Activated B cell treated with CpG ODN at 0.5 μM for 24 hours (primary cell): ENCODE measurements at regions of chr4 and their contacts with region 1.

Region 1: DNA sequence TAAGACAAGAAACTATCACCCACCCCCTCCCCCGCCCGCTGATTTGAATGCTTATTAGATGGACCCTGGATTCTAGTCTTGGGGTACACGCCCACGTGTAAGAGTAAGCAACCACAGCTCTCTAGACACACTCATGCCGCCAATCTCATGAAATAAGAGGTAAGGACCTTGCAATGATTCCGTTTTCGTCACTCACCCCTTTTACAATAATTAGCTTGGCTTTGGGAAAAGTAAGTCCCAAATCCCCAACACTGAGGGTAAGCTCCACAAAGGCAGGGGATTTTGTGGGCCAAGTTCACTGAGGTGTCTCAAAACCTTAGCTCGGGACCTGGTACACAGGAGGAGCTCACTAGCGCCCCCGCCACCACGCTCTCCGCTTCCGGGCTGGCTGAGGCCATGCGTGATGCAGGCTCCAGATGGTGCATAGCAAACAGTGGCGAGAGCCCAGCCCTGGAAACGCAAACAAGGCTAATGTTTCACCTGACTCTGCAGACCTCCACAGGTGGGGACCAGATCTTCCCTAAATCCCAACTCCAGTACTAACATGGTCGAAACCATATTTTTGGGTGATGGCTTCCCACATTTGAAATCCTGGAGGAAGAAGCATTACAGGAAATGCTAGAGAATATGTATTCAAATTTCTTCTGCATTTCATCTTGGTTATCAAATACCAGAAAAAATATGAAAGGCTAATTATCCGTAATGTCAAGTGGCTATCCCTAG is 4.1 kb downstream of the PLAC8 start:
- DNase-seq: peak; percentile 82
- ATAC-seq: peak; percentile 76
- H3K4me3 Mint-ChIP-seq: peak overlapping the region; percentile 94
- H3K27ac Mint-ChIP-seq: peak overlapping the region; percentile 99
- H3K4me1 Mint-ChIP-seq: peaks cover 70% of the 10 kb centered on the region
- H3K27me3 Mint-ChIP-seq: no peaks in the 10 kb centered on the region
- CTCF ChIP-seq: no peak

Region 2: GRCh38 chr4:82890901-82891706 is 219.3 kb before region 1 on chr4 and contains the start of gene SEC31A:
- CTCF ChIA-PET with region 1: no interaction called
- POLR2A ChIA-PET with region 1: no interaction called
- intact Hi-C with region 1: no loop called
- DNase-seq: peak; percentile 97
- ATAC-seq: peak; percentile 92
- H3K4me3 Mint-ChIP-seq: peak within 1 kb of the TSS; percentile 93
- H3K27ac Mint-ChIP-seq: peak within 1 kb of the TSS; percentile 94
- H3K4me1 Mint-ChIP-seq: peaks cover 34% of the 10 kb centered on the region
- H3K27me3 Mint-ChIP-seq: no peaks in the 10 kb centered on the region
- CTCF ChIP-seq: no peak
- total RNA-seq, gene SEC31A: 154 and 172 TPM in 2 replicates

Region 3: DNA sequence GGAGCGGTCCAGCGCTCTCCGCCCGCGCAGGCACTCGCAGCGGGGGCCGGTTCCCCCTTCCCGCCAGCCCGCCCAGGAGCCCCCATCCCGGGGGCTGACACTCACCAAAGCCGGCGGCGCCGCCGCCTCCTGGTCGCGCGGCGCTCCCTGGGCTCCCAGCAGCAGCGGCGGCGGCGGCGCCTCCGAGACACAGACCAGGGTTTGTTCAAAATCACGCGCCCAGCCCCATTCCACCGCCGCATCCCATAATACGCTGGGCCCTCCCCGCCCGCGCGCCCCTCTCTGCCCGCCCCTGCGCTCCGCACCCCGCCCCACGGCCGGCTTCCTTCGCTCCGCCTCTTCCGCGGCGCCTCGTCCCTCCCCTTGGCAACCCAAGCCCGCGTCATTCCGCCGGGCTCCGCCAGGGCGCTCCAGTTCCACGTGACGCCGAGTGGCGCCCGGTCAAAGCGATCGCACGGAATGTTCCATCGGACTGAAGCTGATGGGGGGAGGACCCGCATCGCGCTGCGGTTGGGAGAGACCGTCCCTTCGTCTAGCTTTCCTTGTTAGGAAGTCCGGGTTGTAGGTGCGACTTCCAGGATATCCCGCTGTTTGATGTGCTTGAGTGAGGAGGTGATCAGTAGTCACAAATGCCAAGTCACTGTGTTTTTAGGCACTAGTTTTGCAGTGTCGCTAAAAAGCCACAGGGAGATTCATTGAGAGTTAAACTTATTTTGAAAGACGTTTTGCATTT is 97.5 kb before region 1 on chr4:
- CTCF ChIA-PET with region 1: no interaction called
- POLR2A ChIA-PET with region 1: no interaction called
- intact Hi-C with region 1: loop called (anchors 2 kb)
- DNase-seq: peak; percentile 97
- ATAC-seq: peak; percentile 92
- H3K4me3 Mint-ChIP-seq: peak overlapping the region; percentile 94
- H3K27ac Mint-ChIP-seq: peak overlapping the region; percentile 92
- H3K4me1 Mint-ChIP-seq: peaks cover 44% of the 10 kb centered on the region
- H3K27me3 Mint-ChIP-seq: no peaks in the 10 kb centered on the region
- CTCF ChIP-seq: no peak

Region 4: DNA sequence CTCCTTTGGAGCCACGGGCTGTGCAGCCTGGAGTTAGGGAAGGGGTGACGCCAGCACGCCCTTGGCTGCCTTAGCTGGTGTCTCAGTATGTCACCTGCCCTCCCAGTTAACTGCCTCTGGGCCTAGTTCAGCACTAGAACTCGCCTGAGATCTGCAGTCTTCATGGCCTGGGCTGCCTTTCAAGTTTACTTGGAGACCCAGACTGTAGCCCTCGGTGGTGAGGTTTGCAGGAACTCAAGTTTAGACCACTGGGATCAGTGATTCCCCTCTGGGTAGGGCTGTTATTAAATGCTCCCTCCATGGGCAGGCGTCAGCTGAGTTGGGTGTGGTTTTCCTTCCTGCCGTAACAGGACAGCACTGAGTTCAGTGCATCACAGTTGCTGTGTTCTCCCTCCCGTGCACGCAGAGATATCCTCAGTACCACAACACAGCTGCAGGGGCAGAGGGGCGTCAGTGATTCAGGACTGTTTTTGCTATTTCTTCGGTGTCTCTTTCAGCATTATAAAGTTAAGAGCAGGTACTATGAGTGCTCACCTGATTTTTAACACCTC is 26.4 kb before region 1 on chr4:
- CTCF ChIA-PET with region 1: interaction called, 9 read pairs
- POLR2A ChIA-PET with region 1: interaction called, 17 read pairs
- intact Hi-C with region 1: loop called (anchors 1 kb)
- DNase-seq: peak; percentile 33
- ATAC-seq: peak; percentile 96
- H3K4me3 Mint-ChIP-seq: peak overlapping the region; percentile 57
- H3K27ac Mint-ChIP-seq: peak overlapping the region; percentile 90
- H3K4me1 Mint-ChIP-seq: peaks cover 50% of the 10 kb centered on the region
- H3K27me3 Mint-ChIP-seq: no peaks in the 10 kb centered on the region
- CTCF ChIP-seq: no peak

Region 5: DNA sequence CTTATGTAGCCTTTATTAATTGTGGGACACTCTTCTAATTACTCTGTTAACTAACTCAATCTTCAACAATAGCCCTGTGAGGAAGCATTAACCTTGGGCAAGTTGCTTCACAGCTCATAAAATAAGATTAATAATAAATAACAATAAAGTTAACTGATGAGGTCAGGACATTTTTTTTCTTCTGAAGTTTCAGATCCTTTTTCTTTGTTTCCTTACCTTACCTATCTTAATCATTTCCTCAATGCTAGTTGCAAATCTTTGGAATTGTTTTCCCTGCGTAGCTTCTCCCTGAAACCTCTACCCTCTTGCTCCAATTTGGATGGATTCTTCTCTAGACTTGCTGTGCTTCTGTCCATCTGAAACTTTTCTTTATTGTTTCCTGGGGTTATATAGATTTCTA is 21.7 kb after region 1 on chr4:
- CTCF ChIA-PET with region 1: interaction called, 4 read pairs
- POLR2A ChIA-PET with region 1: interaction called, 63 read pairs
- intact Hi-C with region 1: no loop called
- DNase-seq: no peak
- ATAC-seq: peak; percentile 10
- H3K4me3 Mint-ChIP-seq: no peak overlapping the region
- H3K27ac Mint-ChIP-seq: peak overlapping the region; percentile 33
- H3K4me1 Mint-ChIP-seq: peaks cover 39% of the 10 kb centered on the region
- H3K27me3 Mint-ChIP-seq: no peaks in the 10 kb centered on the region
- CTCF ChIP-seq: no peak

Region 6: DNA sequence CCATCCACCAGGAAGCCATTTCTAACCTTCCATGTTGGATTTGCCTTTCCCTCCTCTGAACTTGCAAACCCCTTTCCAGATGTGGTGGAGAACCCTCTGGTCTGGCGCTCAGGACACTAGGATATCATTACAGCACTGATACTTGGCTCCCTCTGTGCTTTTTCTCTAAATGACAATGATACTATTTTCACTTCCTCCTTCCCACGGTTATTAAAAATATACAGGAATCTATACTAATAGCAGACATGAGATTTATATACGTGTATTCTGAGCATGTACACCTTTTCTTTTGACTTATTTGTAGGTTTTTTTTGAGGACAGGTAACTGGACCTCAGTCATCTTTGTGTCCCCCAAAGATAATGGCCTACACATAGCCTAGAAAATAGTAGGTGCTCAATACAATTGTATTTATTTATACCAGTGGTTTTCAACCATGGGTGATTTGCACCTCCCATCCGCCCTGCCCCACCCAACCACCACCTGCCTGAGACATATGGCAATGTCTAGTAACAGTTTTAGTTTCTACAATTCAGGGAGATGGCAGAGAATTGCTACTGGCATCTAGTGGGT is 64.5 kb after region 1 on chr4:
- CTCF ChIA-PET with region 1: interaction called, 10 read pairs
- POLR2A ChIA-PET with region 1: interaction called, 127 read pairs
- intact Hi-C with region 1: loop called (anchors 1 kb)
- DNase-seq: peak; percentile 32
- ATAC-seq: peak; percentile 74
- H3K4me3 Mint-ChIP-seq: peak overlapping the region; percentile 83
- H3K27ac Mint-ChIP-seq: peak overlapping the region; percentile 94
- H3K4me1 Mint-ChIP-seq: peaks cover 88% of the 10 kb centered on the region
- H3K27me3 Mint-ChIP-seq: no peaks in the 10 kb centered on the region
- CTCF ChIP-seq: no peak

Region 7: GRCh38 chr4:83252782-83253405 is 142.5 kb after region 1 on chr4:
- CTCF ChIA-PET with region 1: interaction called, 38 read pairs
- POLR2A ChIA-PET with region 1: interaction called, 12 read pairs
- intact Hi-C with region 1: loop called (anchors 1 kb)
- DNase-seq: no peak
- ATAC-seq: peak; percentile 73
- H3K4me3 Mint-ChIP-seq: no peak overlapping the region
- H3K27ac Mint-ChIP-seq: peak overlapping the region; percentile 38
- H3K4me1 Mint-ChIP-seq: peaks cover 58% of the 10 kb centered on the region
- H3K27me3 Mint-ChIP-seq: no peaks in the 10 kb centered on the region
- CTCF ChIP-seq: peak; percentile 59